Activated naive CD4-positive, alpha-beta T cell treated with anti-CD3 and anti-CD28 coated beads for 36 hours (primary cell): ENCODE measurements at regions of chr19 and their contacts with region 1.

Region 1: DNA sequence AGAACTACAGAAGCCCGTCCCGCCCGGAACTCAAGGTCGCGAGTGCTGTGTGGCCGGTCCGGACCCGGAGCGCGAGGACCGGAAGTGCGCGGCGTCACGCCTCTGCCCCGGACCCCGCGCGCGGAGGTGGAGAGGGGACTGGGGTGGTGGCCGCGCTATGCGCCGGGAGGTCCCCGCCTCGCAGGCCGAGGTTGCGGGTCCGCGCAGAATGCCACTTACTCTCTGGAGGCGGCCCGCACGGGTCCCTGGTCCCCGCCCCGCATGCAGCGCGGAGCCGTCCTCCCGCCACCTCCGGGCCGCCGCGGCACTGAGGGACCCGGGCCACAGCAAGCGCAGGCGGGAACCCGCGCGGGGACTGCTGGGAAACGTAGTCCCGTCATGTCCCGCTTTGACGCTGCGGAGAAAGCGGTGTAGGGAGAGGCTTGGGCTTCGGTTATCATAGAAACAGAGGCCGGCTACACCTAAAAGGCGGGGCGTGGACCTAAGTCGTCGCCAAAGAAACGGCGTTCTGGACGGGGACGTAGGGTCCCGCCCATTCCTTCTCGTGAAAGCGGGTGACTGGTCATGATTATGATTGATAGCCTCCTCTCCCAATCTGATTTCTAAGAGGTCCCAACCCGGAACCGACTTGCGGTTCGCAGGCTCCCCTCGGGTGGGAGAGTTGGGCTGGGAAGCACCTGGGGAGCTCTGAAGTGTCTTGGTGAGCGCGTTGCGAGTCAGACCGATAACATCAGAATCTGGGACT is at the start of gene ZNF837:
- DNase-seq: peak; percentile 99
- H3K4me3 Mint-ChIP-seq: peak within 1 kb of the TSS; percentile 86
- H3K27ac Mint-ChIP-seq: peak within 1 kb of the TSS; percentile 90
- H3K4me1 Mint-ChIP-seq: peaks cover 20% of the 10 kb centered on the region
- H3K27me3 Mint-ChIP-seq: no peaks in the 10 kb centered on the region
- total RNA-seq, gene ZNF837: 1.7 to 1.9 TPM

Region 2: DNA sequence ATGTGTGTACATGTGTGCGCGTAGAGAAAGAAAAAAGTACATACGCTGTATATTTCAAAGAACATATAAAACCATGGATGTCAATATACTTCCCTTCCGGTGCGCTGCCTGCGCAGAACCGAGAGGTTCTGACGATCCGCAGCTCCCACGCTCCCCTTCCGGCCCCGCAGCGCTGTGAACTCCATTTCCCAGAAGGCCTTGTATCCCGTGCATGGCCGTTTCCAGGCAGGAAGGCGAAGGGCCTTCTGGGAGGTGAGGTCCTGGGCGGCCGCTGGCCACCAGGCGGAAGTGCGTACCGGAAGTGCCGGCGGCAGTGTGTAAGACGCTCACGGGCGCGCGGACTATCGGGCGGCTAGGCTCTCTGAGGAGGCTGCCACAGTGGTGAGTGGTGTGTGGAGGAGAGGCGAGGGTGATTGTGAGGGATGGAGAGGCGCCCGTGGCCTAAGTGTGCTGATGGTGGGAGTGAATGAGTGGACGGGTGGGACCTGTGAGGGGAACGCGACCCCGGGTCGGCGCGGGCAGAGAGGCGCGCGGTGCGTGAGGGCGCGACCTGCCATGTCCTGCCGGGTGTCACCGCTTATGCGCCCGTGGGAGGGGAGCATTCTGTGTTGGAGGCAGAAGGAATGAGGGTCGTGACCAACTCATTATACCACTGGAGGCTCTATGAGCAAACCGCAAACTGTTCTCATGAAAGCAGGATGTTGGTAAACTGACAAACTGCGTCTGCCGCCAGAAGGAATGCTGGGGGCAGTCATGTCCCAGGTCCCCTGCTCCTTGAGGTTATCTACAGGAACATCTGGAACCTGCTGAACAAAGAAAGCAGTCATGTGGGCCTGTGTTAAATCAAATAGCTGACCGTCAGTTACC is 75.6 kb before region 1 on chr19 and contains the start of gene ERVK3-1:
- CTCF ChIA-PET with region 1: no interaction called
- intact Hi-C with region 1: loop called (anchors 1 kb)
- DNase-seq: peak; percentile 95
- H3K4me3 Mint-ChIP-seq: peak within 1 kb of the TSS; percentile 100
- H3K27ac Mint-ChIP-seq: peak within 1 kb of the TSS; percentile 99
- H3K4me1 Mint-ChIP-seq: peaks cover 46% of the 10 kb centered on the region
- H3K27me3 Mint-ChIP-seq: no peaks in the 10 kb centered on the region
- total RNA-seq, gene ERVK3-1: 24.5 to 27.7 TPM

Region 3: GRCh38 chr19:58400916-58401839 is 20.3 kb after region 1 on chr19:
- CTCF ChIA-PET with region 1: no interaction called
- intact Hi-C with region 1: loop called (anchors 1 kb)
- DNase-seq: peak; percentile 99
- H3K4me3 Mint-ChIP-seq: peak overlapping the region; percentile 94
- H3K27ac Mint-ChIP-seq: peak overlapping the region; percentile 26
- H3K4me1 Mint-ChIP-seq: peaks cover 9% of the 10 kb centered on the region
- H3K27me3 Mint-ChIP-seq: peaks cover 11% of the 10 kb centered on the region

Region 4: GRCh38 chr19:58416604-58417003 is 35.7 kb after region 1 on chr19:
- CTCF ChIA-PET with region 1: no interaction called
- intact Hi-C with region 1: no loop called
- DNase-seq: no peak
- H3K4me3 Mint-ChIP-seq: no peak overlapping the region
- H3K27ac Mint-ChIP-seq: no peak overlapping the region
- H3K4me1 Mint-ChIP-seq: peaks cover 3% of the 10 kb centered on the region
- H3K27me3 Mint-ChIP-seq: no peaks in the 10 kb centered on the region

Region 5: DNA sequence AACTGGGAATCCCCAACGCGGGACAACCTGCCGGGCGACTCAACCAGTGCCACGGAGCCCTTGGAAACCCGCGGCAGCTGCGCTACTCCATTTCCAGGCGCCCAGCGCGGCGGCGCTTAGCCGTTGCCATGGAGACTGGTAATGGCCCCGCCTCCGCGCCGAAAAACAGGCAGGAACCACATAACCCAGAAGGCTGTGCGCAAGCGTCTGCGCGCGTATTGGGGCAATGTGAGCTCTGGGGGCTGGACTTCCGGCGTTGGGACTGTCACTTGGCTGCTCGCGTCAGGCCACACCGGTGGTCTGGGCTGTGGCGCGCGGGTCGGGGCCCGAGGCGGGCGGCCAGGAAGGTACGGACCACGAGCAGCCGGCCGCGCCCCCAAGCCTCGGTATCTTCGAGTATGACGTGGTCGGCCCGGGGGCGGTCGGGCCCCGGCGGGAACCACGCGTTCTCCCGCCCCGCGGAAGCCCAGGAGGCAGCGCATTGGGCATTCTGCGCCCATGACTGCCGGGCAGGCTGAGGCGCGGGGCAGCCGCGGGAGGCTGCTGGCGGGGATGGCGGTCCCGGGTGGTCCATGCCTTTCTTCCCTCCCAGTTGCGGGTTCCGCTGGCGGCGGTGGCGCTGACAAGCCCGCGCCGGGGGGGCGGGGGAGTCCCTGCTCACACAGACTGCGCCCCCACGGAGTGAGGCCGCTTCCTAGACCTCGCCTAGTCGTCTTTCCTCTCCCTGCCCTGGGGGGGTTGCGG is 70.6 kb after region 1 on chr19 and contains the start of gene ZNF324B:
- CTCF ChIA-PET with region 1: no interaction called
- intact Hi-C with region 1: loop called (anchors 1 kb)
- DNase-seq: peak; percentile 97
- H3K4me3 Mint-ChIP-seq: peak within 1 kb of the TSS; percentile 79
- H3K27ac Mint-ChIP-seq: no peak within 1 kb of the TSS
- H3K4me1 Mint-ChIP-seq: peaks cover 21% of the 10 kb centered on the region
- H3K27me3 Mint-ChIP-seq: peaks cover 11% of the 10 kb centered on the region
- total RNA-seq, gene ZNF324B: 5.8 to 6.2 TPM

Region 6: GRCh38 chr19:58482372-58482771 is 101.5 kb after region 1 on chr19:
- CTCF ChIA-PET with region 1: no interaction called
- intact Hi-C with region 1: no loop called
- DNase-seq: no peak
- H3K4me3 Mint-ChIP-seq: no peak overlapping the region
- H3K27ac Mint-ChIP-seq: no peak overlapping the region
- H3K4me1 Mint-ChIP-seq: no peaks in the 10 kb centered on the region
- H3K27me3 Mint-ChIP-seq: no peaks in the 10 kb centered on the region

Region 7: GRCh38 chr19:58499021-58499927 is 118.4 kb after region 1 on chr19:
- CTCF ChIA-PET with region 1: no interaction called
- intact Hi-C with region 1: loop called (anchors 1 kb)
- DNase-seq: peak; percentile 100
- H3K4me3 Mint-ChIP-seq: peak overlapping the region; percentile 92
- H3K27ac Mint-ChIP-seq: peak overlapping the region; percentile 81
- H3K4me1 Mint-ChIP-seq: peaks cover 23% of the 10 kb centered on the region
- H3K27me3 Mint-ChIP-seq: no peaks in the 10 kb centered on the region